PC-9 (cell line): ENCODE measurements at regions of chr2 and their contacts with region 1.

Region 1: DNA sequence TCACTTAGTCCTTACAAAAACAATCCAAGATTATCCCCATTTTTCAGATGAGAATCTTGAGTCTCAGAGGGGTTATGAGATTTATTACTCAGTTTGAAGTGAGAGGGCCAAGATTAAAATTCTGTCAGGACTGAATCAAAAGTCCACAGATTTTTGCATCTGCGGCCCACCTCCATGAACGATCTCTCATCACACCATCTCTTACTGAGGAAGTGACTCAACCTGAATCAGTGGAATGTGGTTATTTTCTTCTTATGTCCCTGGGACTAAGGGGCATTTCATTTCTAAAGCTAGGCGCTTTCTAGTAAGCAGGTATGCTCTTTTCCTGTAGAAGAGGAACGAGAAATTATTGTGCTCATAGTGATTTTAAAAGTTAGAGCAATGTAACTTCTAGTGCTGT is 360.3 kb upstream of the SPHKAP start:
- DNase-seq: no peak
- H3K4me3 ChIP-seq: no peak overlapping the region
- H3K27ac ChIP-seq: no peak overlapping the region
- H3K4me1 ChIP-seq: 0 out of 2 replicates have a peak, but pooled peaks cover 9% of the 10 kb centered on the region
- H3K27me3 ChIP-seq: no peaks in the 10 kb centered on the region
- CTCF ChIP-seq: no peak

Region 2: GRCh38 chr2:228387776-228388175 is 154.0 kb before region 1 on chr2:
- CTCF ChIA-PET with region 1: no interaction called
- POLR2A ChIA-PET with region 1: no interaction called
- intact Hi-C with region 1: no loop called
- DNase-seq: no peak
- H3K4me3 ChIP-seq: no peak overlapping the region
- H3K27ac ChIP-seq: no peak overlapping the region
- H3K4me1 ChIP-seq: no peaks in the 10 kb centered on the region
- H3K27me3 ChIP-seq: no peaks in the 10 kb centered on the region
- CTCF ChIP-seq: no peak

Region 3: GRCh38 chr2:228575897-228576296 is 34.1 kb after region 1 on chr2:
- CTCF ChIA-PET with region 1: no interaction called
- POLR2A ChIA-PET with region 1: interaction called, 14 read pairs
- intact Hi-C with region 1: no loop called
- DNase-seq: no peak
- H3K4me3 ChIP-seq: no peak overlapping the region
- H3K27ac ChIP-seq: no peak overlapping the region
- H3K4me1 ChIP-seq: no peaks in the 10 kb centered on the region
- H3K27me3 ChIP-seq: no peaks in the 10 kb centered on the region
- CTCF ChIP-seq: no peak

Region 4: DNA sequence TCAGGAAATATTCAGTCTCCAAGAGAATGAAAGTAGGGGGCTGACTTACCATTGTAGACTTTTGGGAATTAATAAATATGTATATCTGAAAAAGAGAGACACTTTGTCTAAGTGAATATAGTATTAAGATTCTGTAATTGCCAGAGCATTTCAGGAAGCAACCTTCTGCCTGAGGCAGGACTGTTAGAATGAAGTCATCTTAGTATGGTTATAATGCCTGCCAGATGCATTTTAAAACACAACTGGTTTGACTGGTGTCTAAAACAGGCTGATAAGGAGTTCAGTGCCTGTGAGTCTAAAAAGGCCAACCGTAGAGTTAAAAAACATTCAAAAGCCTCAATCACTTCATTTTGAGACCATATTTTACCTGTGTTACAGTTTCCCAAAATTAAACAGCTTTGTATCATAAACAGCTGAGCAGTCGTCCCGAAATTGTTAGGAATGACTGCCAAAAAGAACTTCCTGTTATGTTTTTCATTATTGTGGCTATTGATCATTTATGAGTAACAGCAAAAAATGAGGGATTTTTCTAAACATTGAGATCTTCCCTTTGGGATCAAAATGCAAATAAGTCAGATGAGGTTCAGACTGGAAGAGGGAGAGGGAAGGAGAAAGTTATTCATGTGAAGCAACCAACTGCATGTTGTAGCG is 285.4 kb after region 1 on chr2:
- CTCF ChIA-PET with region 1: no interaction called
- POLR2A ChIA-PET with region 1: no interaction called
- intact Hi-C with region 1: no loop called
- DNase-seq: no peak
- H3K4me3 ChIP-seq: no peak overlapping the region
- H3K27ac ChIP-seq: no peak overlapping the region
- H3K4me1 ChIP-seq: no peaks in the 10 kb centered on the region
- H3K27me3 ChIP-seq: no peaks in the 10 kb centered on the region
- CTCF ChIP-seq: no peak